ENCODE measurements at regions of chr17 and their contacts with region 1.

Region 1: GRCh38 chr17:1730328-1731193 is 6.1 kb downstream of the WDR81 start:
- DNase-seq: no peak
- ATAC-seq: no peak
- H3K4me3 Mint-ChIP-seq: no peak overlapping the region
- H3K27ac Mint-ChIP-seq: peak overlapping the region; percentile 24
- H3K4me1 Mint-ChIP-seq: peaks cover 56% of the 10 kb centered on the region
- H3K27me3 Mint-ChIP-seq: no peaks in the 10 kb centered on the region
- CTCF ChIP-seq: no peak

Region 2: GRCh38 chr17:1590031-1590748 is 140.4 kb before region 1 on chr17:
- CTCF ChIA-PET with region 1: no interaction called
- POLR2A ChIA-PET with region 1: no interaction called
- intact Hi-C with region 1: no loop called
- DNase-seq: no peak
- ATAC-seq: no peak
- H3K4me3 Mint-ChIP-seq: no peak overlapping the region
- H3K27ac Mint-ChIP-seq: peak overlapping the region; percentile 46
- H3K4me1 Mint-ChIP-seq: peaks cover 48% of the 10 kb centered on the region
- H3K27me3 Mint-ChIP-seq: no peaks in the 10 kb centered on the region
- CTCF ChIP-seq: no peak

Region 3: GRCh38 chr17:1764284-1764683 is 33.7 kb after region 1 on chr17:
- CTCF ChIA-PET with region 1: no interaction called
- POLR2A ChIA-PET with region 1: interaction called, 13 read pairs
- intact Hi-C with region 1: no loop called
- DNase-seq: peak; percentile 41
- ATAC-seq: peak; percentile 85
- H3K4me3 Mint-ChIP-seq: peak overlapping the region; percentile 53
- H3K27ac Mint-ChIP-seq: peak overlapping the region; percentile 72
- H3K4me1 Mint-ChIP-seq: peaks cover 46% of the 10 kb centered on the region
- H3K27me3 Mint-ChIP-seq: no peaks in the 10 kb centered on the region
- CTCF ChIP-seq: no peak

Region 4: DNA sequence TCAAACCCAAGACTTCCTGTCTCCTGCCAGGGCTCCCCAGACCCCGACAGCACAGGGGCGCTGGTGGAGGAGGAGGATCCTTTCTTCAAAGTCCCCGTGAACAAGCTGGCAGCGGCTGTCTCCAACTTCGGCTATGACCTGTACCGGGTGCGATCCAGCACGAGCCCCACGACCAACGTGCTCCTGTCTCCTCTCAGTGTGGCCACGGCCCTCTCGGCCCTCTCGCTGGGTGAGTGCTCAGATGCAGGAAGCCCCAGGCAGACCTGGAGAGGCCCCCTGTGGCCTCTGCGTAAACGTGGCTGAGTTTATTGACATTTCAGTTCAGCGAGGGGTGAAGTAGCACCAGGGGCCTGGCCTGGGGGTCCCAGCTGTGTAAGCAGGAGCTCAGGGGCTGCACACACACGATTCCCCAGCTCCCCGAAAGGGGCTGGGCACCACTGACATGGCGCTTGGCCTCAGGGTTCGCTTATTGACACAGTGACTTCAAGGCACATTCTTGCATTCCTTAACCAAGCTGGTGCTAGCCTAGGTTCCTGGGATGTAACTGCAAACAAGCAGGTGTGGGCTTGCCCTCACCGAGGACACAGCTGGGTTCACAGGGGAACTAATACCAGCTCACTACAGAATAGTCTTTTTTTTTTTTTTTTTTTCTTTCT is 39.4 kb after region 1 on chr17:
- CTCF ChIA-PET with region 1: no interaction called
- POLR2A ChIA-PET with region 1: interaction called, 10 read pairs
- intact Hi-C with region 1: loop called (anchors 2 kb)
- DNase-seq: no peak
- ATAC-seq: peak; percentile 46
- H3K4me3 Mint-ChIP-seq: peak overlapping the region; percentile 58
- H3K27ac Mint-ChIP-seq: peak overlapping the region; percentile 82
- H3K4me1 Mint-ChIP-seq: peaks cover 52% of the 10 kb centered on the region
- H3K27me3 Mint-ChIP-seq: no peaks in the 10 kb centered on the region
- CTCF ChIP-seq: no peak

Measured in activated B cell treated with CpG ODN at 0.5 μM for 24 hours (primary cell).